ENCODE measurements at regions of chrX and their contacts with region 1.

Region 1: DNA sequence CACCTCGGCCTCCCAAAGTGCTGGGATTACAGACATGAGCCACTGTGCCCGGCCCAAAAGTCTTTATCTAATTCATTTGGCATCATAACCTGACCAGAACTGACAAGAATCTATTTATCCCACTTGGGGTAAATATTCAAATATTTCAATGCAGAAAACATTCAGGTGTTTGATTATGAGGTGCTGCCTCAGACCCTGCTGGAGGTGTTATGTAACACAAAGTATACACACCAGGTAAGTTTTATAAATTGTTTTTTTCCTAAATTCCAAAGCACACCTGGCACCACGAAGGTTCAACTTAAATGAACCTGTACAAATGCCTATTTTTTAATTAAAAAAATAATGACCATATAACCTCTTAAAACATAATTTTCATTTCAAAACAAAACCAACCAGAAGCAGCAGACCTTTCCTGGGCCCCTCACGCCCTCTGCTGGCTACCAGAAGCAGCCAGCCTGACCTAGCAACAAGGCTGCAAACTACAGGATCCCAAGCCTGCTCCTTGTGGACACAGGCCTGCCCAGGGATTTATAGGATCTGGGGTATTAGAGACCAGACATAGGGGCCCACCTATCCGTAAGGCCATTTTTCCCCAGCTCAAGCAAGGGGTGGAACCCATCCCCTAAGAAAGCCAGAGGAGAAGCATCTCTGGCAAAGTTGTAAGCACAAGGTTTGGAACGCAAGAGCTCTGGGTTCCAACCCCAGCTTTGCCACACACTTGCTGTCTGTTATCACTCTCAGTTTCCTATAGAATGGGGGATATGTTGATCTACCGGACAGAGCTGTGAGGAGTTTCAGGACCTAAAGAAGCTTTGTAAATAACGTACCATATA is 11.7 kb downstream of the OTUD5 start:
- DNase-seq: no peak
- ATAC-seq: peak; percentile 56
- H3K4me3 Mint-ChIP-seq: no peak overlapping the region
- H3K27ac Mint-ChIP-seq: peak overlapping the region; percentile 41
- H3K4me1 Mint-ChIP-seq: peaks cover 44% of the 10 kb centered on the region
- H3K27me3 Mint-ChIP-seq: no peaks in the 10 kb centered on the region
- CTCF ChIP-seq: no peak

Region 2: GRCh38 chrX:48648336-48648751 is 297.4 kb before region 1 on chrX:
- CTCF ChIA-PET with region 1: interaction called, 10 read pairs
- POLR2A ChIA-PET with region 1: no interaction called
- intact Hi-C with region 1: loop called (anchors 1 kb)
- DNase-seq: no peak
- ATAC-seq: peak; percentile 65
- H3K4me3 Mint-ChIP-seq: no peak overlapping the region
- H3K27ac Mint-ChIP-seq: no peak overlapping the region
- H3K4me1 Mint-ChIP-seq: peaks cover 2% of the 10 kb centered on the region
- H3K27me3 Mint-ChIP-seq: no peaks in the 10 kb centered on the region
- CTCF ChIP-seq: no peak

Region 3: GRCh38 chrX:48823053-48823452 is 122.7 kb before region 1 on chrX:
- CTCF ChIA-PET with region 1: no interaction called
- POLR2A ChIA-PET with region 1: no interaction called
- intact Hi-C with region 1: loop called (anchors 5 kb)
- DNase-seq: no peak
- ATAC-seq: no peak
- H3K4me3 Mint-ChIP-seq: no peak overlapping the region
- H3K27ac Mint-ChIP-seq: no peak overlapping the region
- H3K4me1 Mint-ChIP-seq: peaks cover 7% of the 10 kb centered on the region
- H3K27me3 Mint-ChIP-seq: peaks cover 8% of the 10 kb centered on the region
- CTCF ChIP-seq: no peak

Region 4: DNA sequence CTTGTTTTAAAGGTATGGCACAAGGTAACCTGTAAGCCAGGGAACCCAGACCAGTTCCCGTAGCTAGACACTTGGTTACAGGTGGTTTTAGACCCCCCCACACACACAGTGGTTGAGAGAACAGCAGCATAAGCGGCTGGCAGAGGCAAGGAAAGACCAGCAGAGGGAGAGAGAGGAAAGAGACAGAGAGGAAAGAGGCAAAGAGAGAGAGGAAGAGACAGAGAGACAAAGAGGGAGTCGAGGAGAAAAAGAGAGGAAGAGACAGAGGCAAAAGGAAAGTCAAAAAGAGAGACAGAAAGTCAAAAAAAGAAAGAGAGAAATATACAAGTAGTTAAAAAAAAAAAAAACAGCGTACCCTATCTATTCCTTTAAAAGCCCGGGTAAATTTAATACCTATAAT is 90.8 kb before region 1 on chrX:
- CTCF ChIA-PET with region 1: no interaction called
- POLR2A ChIA-PET with region 1: no interaction called
- intact Hi-C with region 1: loop called (anchors 1 kb)
- DNase-seq: no peak
- ATAC-seq: no peak
- H3K4me3 Mint-ChIP-seq: no peak overlapping the region
- H3K27ac Mint-ChIP-seq: no peak overlapping the region
- H3K4me1 Mint-ChIP-seq: peaks cover 5% of the 10 kb centered on the region
- H3K27me3 Mint-ChIP-seq: no peaks in the 10 kb centered on the region
- CTCF ChIP-seq: no peak

Region 5: DNA sequence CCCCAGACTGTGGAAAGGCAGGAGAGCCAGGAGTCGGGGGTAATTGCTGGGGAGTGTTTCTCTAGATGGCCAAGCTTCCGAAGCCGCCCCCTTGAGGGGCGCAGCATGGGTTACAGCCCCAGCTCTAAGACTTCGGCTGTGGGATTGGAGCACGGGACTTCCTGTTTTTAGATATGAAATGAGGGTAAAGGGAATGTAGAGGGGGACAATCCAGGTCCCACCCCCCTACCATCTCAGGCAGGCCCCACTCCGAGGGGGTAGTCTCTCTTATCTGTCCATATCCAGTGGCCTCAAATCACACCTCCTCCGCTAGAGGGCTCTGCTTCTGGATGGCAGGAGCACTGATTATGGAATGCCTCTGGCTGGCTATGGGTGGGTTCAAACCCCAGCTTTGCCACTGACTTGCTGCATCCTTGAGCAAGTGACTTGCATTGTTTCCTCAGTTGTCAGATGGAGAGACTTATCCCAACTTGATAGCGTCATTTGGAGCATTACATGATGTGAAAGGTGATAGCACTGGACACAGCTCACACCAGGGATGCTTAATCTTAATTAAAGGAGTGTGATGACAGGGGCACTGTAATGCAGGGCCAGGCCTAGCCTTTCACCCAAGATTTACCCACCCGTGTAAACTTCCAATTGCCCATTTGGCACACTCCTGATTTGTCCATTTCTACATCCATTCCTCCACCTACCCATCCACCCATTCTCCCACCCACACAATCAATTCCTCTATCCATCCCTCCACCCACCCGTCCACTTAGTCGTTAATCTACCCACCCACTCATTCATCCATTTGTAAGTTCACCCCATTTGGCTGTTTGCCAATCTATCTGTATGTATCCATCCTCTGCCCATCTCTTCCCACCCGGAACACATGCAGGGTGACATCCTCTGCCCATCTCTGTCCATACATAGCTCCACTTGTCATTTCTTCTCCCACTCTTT is 26.8 kb after region 1 on chrX:
- CTCF ChIA-PET with region 1: no interaction called
- POLR2A ChIA-PET with region 1: no interaction called
- intact Hi-C with region 1: no loop called
- DNase-seq: no peak
- ATAC-seq: peak; percentile 67
- H3K4me3 Mint-ChIP-seq: peak overlapping the region; percentile 57
- H3K27ac Mint-ChIP-seq: no peak overlapping the region
- H3K4me1 Mint-ChIP-seq: peaks cover 13% of the 10 kb centered on the region
- H3K27me3 Mint-ChIP-seq: no peaks in the 10 kb centered on the region
- CTCF ChIP-seq: no peak